PC-9 (cell line): ENCODE measurements at regions of chr10 and their contacts with region 1.

Region 1: GRCh38 chr10:75532253-75532924 is 101.0 kb downstream of the LRMDA start:
- DNase-seq: peak in 1 of 2 experiments; percentile 62
- H3K4me3 ChIP-seq: no peak overlapping the region
- H3K27ac ChIP-seq: no peak overlapping the region; the same call in 1 of the 2 replicates
- H3K4me1 ChIP-seq: peaks cover 34% of the 10 kb centered on the region
- H3K27me3 ChIP-seq: no peaks in the 10 kb centered on the region
- CTCF ChIP-seq: no peak

Region 2: DNA sequence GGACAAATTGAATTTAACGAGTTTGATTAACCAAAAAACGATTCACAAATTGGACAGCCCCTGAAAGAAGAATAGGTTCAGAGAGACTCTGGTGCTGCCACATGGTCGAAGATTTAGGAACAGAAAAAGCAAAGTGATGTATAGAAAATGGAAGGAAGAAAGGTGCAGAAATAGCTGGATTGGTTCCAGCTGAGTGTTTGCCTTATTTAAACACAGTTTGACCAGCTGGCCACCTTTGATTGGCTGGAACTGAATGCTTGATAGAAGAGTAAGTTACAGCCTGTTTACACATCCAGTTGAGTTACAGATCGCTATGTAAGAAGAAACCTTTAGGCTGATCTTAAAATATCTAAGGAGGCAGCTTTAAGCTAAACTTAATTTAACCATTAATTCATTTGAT is 746.3 kb before region 1 on chr10:
- CTCF ChIA-PET with region 1: no interaction called
- POLR2A ChIA-PET with region 1: no interaction called
- intact Hi-C with region 1: no loop called
- DNase-seq: no peak
- H3K4me3 ChIP-seq: no peak overlapping the region
- H3K27ac ChIP-seq: no peak overlapping the region
- H3K4me1 ChIP-seq: no peaks in the 10 kb centered on the region
- H3K27me3 ChIP-seq: no peaks in the 10 kb centered on the region
- CTCF ChIP-seq: no peak

Region 3: GRCh38 chr10:77041636-77042258 is 1509.4 kb after region 1 on chr10:
- CTCF ChIA-PET with region 1: no interaction called
- POLR2A ChIA-PET with region 1: interaction called, 11 read pairs
- intact Hi-C with region 1: no loop called
- DNase-seq: no peak
- H3K4me3 ChIP-seq: no peak overlapping the region
- H3K27ac ChIP-seq: no peak overlapping the region
- H3K4me1 ChIP-seq: no peaks in the 10 kb centered on the region
- H3K27me3 ChIP-seq: no peaks in the 10 kb centered on the region
- CTCF ChIP-seq: no peak